ENCODE measurements at regions of chr14 and their contacts with region 1.

Region 1: DNA sequence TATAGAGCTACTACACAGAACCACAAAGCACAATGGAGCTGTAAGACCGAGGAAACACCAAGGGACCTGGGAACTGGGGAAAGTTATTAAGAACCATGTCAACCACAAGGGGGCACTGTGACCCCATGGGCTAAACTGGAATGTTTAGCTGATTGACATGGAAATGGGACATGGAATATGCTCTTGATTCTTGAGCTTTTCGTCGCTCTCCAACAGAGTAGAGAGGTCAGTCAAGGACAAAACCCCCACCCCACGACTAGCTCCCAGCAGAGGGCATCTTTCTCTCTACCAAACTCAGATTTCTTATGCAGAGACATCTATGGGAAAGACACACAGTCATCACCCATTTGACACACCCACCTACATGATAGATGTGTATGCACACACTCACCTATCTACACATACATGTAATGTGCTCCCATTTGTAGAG is 10.1 kb downstream of the NDRG2 start:
- DNase-seq: peak; percentile 74 to 95 (median 86)
- H3K4me3 ChIP-seq: no peak overlapping the region
- H3K27ac ChIP-seq: peak overlapping the region in 52 of 59 donors; percentile 3 to 82 (median 62)
- H3K27me3 ChIP-seq: peaks cover 0 to 4% (median 0%) of the 10 kb centered on the region in 45 donors
- CTCF ChIP-seq: peak; percentile 89 to 99 (median 97)

Region 2: GRCh38 chr14:20970983-20971704 is 43.6 kb before region 1 on chr14:
- intact Hi-C with region 1: loop called in 1 of 2 experiments (anchors 5 kb)
- DNase-seq: peak; percentile 66 to 89 (median 76)
- H3K4me3 ChIP-seq: peak overlapping the region; percentile 54 to 97 (median 70)
- H3K27ac ChIP-seq: peak overlapping the region in 55 of 59 donors; percentile 10 to 88 (median 68)
- H3K27me3 ChIP-seq: peaks cover 0 to 20% (median 0%) of the 10 kb centered on the region in 45 donors
- CTCF ChIP-seq: peak; percentile 52 to 88 (median 78)

Region 3: GRCh38 chr14:21024585-21025370 is 10.0 kb after region 1 on chr14 and contains the start of gene NDRG2:
- intact Hi-C with region 1: loop called in 1 of 2 experiments (anchors 1 kb)
- DNase-seq: peak; percentile 23 to 80 (median 68)
- H3K4me3 ChIP-seq: peak within 1 kb of the TSS; percentile 67 to 95 (median 82)
- H3K27ac ChIP-seq: peak within 1 kb of the TSS; percentile 76 to 100 (median 99)
- H3K27me3 ChIP-seq: peaks cover 0 to 30% (median 0%) of the 10 kb centered on the region in 45 donors
- CTCF ChIP-seq: peak in 7 of 56 donors; percentile 6 to 36 (median 17)
- total RNA-seq, gene NDRG2: 513 to 2,446 (median 961) TPM

Region 4: DNA sequence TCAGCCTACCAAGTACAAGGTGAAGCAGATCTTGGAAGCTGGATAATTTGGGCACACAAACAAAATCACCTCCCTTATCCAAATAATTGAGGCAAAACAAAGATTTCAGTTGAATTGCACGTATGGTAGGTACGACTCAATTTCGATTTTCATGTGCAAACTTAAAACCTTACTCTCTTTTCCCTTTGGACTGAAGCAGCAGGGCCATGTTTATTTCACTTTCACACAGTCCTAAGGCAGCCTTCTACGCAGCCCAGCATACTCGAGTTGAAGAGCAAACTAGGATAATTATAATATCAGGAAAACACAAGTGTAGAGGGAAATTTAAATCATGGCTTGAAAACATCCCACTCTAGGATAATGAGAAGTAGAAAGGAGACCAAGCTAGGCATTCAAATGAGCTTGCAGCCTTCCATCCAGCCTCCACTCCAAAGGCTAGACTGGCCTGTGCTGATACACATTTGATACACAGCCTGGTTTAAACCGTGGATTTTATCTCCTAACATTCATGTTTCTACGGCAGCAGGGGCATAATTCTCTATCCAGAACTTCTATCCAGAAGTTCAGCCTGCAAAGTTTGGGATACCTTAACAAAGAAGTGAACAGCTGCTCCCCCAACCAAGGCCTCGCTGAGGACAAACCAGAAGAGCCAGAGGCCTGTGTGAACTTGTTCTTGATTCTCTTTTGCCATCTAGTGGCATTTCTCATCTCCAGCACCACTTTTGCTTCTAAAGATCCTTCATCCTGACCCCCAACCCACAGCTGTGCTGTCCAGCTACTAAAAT is 25.0 kb after region 1 on chr14:
- intact Hi-C with region 1: loop called (anchors 1 kb)
- DNase-seq: peak in 3 of 10 donors; percentile 24 to 68 (median 56)
- H3K4me3 ChIP-seq: peak overlapping the region in 31 of 59 donors; percentile 0 to 51 (median 25)
- H3K27ac ChIP-seq: peak overlapping the region; percentile 31 to 98 (median 92)
- H3K27me3 ChIP-seq: peaks cover 0 to 6% (median 0%) of the 10 kb centered on the region in 45 donors
- CTCF ChIP-seq: peak; percentile 27 to 92 (median 79)

Region 5: DNA sequence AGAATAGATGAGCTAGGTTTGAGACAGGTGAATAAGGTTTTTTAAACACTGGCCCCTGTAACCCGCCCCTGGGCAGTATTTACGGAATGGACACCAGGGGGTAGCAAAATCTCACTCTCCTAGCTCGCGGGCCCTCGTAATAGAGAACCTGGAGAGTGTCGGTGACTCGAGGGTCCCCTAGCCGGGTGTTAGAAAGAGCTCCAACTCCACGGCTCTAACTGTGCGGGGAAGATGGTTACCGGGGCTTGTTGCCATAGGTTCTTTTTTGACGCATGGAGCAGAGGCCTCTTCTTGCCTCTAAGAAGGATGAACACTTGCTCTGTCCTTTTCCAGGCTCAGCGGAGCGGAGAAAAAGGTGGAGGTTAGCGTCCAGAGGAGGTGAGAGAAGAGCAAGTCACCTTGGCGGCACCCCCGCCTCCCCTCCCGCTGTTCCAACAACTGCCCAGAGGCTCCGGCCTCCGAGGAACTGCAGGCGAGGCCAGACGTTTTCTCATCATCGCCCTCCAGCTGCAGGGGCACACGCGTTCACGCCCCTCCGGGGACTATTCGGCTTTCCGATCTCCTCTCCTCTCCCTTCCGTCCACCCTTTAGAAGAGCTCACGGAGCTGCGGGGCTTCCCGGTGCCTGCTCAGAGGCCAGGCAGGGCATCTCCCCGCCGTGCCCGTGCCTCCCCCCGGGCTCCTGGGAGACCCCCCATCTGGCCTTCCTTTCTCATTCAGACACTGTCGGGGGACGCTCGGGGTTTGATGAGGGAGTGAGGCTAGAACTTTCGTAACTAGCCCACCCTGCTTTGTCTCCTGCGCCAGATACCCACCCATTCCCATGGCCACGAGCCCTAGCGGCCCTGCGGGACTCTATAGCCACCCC is 54.0 kb after region 1 on chr14:
- intact Hi-C with region 1: no loop called
- DNase-seq: peak in 5 of 10 donors; percentile 45 to 69 (median 53)
- H3K4me3 ChIP-seq: peak overlapping the region; percentile 49 to 85 (median 73)
- H3K27ac ChIP-seq: peak overlapping the region; percentile 3 to 98 (median 95)
- H3K27me3 ChIP-seq: peaks cover 0 to 23% (median 0%) of the 10 kb centered on the region in 45 donors
- CTCF ChIP-seq: peak; percentile 43 to 84 (median 68)

Region 6: DNA sequence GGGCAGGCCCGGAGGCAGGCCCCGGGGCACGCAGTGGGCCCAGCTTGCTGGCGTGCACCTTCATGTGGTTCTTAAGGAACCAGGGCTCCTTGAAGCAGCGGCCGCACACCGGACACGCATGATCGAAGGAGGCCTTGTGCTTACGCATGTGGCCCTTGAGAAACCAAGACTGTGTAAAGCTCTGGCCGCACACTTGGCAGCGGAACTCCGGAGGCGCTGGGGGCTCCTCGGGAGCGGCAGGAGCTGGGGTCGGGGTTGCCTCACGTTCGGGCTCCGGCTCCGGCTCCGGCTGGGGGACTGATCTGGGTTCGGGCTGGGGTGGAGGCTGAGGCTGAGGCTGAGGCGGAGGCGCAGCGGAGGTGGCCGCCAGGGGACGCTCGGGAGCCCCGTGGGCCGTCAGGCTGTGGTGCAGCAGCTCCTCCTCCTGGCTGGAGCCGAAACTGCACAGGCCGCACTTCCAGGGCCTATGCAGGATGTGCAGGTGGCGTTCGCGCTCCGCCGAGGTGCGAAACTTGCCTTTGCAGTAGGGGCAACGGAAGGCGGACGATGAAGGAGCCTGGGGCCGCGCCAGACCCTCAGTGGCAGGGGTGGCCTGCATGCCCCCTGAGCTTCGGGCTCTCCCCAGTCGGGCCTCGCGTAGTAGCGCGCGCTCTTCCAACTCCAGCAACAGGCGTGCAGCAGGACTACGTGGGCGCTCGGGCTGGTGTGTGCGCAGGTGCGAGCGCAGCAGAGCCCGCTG is 77.7 kb after region 1 on chr14:
- intact Hi-C with region 1: loop called (anchors 5 kb)
- DNase-seq: peak; percentile 65 to 83 (median 75)
- H3K4me3 ChIP-seq: peak overlapping the region in 19 of 59 donors; percentile 0 to 36 (median 17)
- H3K27ac ChIP-seq: peak overlapping the region in 41 of 59 donors; percentile 2 to 81 (median 34)
- H3K27me3 ChIP-seq: no peaks in the 10 kb centered on the region
- CTCF ChIP-seq: peak; percentile 65 to 100 (median 100)

Region 7: GRCh38 chr14:21103710-21104447 is 89.1 kb after region 1 on chr14:
- intact Hi-C with region 1: loop called in 1 of 2 experiments (anchors 5 kb)
- DNase-seq: peak; percentile 92 to 99 (median 98)
- H3K4me3 ChIP-seq: peak overlapping the region; percentile 57 to 93 (median 79)
- H3K27ac ChIP-seq: peak overlapping the region; percentile 90 to 100 (median 99)
- H3K27me3 ChIP-seq: no peaks in the 10 kb centered on the region
- CTCF ChIP-seq: peak in 51 of 56 donors; percentile 12 to 83 (median 67)

Region 8: GRCh38 chr14:22122227-22122818 is 1107.5 kb after region 1 on chr14:
- intact Hi-C with region 1: no loop called
- DNase-seq: no peak
- H3K4me3 ChIP-seq: no peak overlapping the region
- H3K27ac ChIP-seq: no peak overlapping the region
- H3K27me3 ChIP-seq: peaks cover 0 to 11% (median 0%) of the 10 kb centered on the region in 45 donors
- CTCF ChIP-seq: no peak

Measured in dorsolateral prefrontal cortex (tissue), 120 donors.